ENCODE measurements at regions of chr2 and their contacts with region 1.

Region 1: GRCh38 chr2:38274286-38275276 is 102.5 kb downstream of the ATL2 start:
- DNase-seq: peak in 3 of 5 donors; percentile 52 to 91 (median 87)
- H3K4me3 ChIP-seq: no peak overlapping the region
- H3K27ac ChIP-seq: no peak overlapping the region
- H3K4me1 ChIP-seq: peaks cover 3 to 7% (median 4%) of the 10 kb centered on the region in 3 donors
- H3K27me3 ChIP-seq: no peaks in the 10 kb centered on the region
- CTCF ChIP-seq: peak; percentile 67

Region 2: DNA sequence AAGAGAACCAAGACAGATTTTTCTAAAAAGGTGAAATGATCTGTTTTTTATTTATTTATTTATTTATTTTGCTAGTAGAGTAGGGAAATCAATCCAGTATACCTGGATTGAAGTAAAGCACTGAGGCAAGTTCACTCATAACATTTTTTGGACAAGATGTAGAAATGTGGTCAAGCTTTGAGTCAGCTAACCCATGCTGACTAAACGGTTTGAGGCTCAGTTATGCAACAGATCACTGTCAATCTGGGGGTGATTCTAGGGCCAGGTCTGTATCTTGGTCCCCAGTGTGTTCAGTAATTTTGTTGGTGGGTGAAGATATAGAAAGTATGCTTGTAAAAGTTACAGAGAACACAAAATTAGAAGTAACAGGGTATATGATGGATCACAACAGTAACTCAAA is 289.2 kb before region 1 on chr2:
- intact Hi-C with region 1: loop called (anchors 5 kb)
- DNase-seq: no peak
- H3K4me3 ChIP-seq: no peak overlapping the region
- H3K27ac ChIP-seq: no peak overlapping the region
- H3K4me1 ChIP-seq: no peaks in the 10 kb centered on the region
- H3K27me3 ChIP-seq: no peaks in the 10 kb centered on the region
- CTCF ChIP-seq: no peak